HepG2 (cell line): ENCODE measurements at regions of chr1 and their contacts with region 1.

Region 1: DNA sequence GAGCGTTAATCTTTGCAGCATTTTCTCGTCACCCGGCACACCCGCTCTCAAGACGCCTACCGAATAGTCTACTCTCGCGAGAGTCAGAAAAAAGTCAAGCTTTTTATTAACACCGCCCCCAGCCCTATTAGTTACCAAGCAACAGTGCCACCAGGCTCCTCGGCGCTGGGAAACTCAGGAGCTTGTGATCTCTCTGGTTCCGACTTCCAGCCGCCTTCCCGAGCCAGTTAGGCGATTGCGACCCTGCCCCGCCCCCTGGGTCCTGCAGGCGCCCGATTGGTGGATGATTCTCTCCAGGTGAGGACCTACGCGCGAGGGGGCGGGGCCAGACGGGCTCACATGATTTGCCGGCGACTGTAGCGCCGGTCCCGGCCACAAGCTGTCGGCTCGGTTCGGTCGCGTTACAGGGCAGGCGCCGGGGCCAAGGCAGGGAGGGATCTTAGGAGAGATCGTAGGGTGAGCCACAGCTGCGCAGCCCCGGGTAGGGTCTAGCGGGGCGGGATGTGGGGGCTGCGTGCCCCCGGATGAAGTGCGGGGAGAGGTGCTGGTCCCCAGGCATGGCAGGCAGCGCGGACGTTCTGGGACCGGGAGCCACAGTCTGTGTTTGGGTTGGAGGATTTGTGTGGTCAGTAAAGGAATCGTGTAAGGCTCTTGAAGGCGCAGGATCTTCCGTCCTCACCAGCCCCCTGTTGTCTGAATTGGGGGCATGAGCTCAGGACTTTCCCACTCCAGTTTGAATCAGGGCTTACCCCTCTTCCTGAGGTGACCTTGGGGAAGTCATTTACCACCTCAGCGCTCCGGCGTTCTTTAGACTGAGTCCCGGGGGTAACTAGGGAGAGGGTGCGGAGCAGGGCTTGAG is at the start of gene PFKFB2:
- DNase-seq: peak; percentile 99
- ATAC-seq: peak; percentile 89
- H3K4me3 ChIP-seq: peak within 1 kb of the TSS; percentile 95 to 98 (median 96)
- H3K27ac ChIP-seq: peak within 1 kb of the TSS; percentile 90
- H3K4me1 ChIP-seq: peaks cover 30% of the 10 kb centered on the region
- H3K27me3 ChIP-seq: no peaks in the 10 kb centered on the region; a peak in 1 of 5 replicates
- CTCF ChIP-seq: peak; percentile 36
- EP300 ChIP-seq: no peak; a peak in 1 of 4 replicates
- POLR2A ChIP-seq: peak; percentile 86 to 87
- RAD21 ChIP-seq: peak; percentile 57
- total RNA-seq, gene PFKFB2: 9.4 and 10.6 TPM in 2 replicates

Region 2: GRCh38 chr1:206839857-206840256 is 213.3 kb before region 1 on chr1:
- CTCF ChIA-PET with region 1: no interaction called
- POLR2A ChIA-PET with region 1: no interaction called
- in situ Hi-C with region 1: no loop called
- intact Hi-C with region 1: no loop called
- DNase-seq: no peak
- ATAC-seq: no peak
- H3K4me3 ChIP-seq: no peak overlapping the region
- H3K27ac ChIP-seq: no peak overlapping the region
- H3K4me1 ChIP-seq: no peaks in the 10 kb centered on the region
- H3K27me3 ChIP-seq: peaks cover 0 to 31% of the 10 kb centered on the region in 2 experiments; a peak in 3 of 5 replicates
- CTCF ChIP-seq: no peak
- EP300 ChIP-seq: no peak
- POLR2A ChIP-seq: no peak
- RAD21 ChIP-seq: no peak

Region 3: GRCh38 chr1:207021139-207021861 is 31.8 kb before region 1 on chr1:
- CTCF ChIA-PET with region 1: no interaction called
- POLR2A ChIA-PET with region 1: interaction called, 11 read pairs
- in situ Hi-C with region 1: no loop called
- intact Hi-C with region 1: no loop called
- DNase-seq: peak; percentile 89
- ATAC-seq: peak; percentile 67
- H3K4me3 ChIP-seq: peak overlapping the region in 1 of 3 experiments; percentile 17; a peak in 1 of 6 replicates
- H3K27ac ChIP-seq: peak overlapping the region; percentile 56
- H3K4me1 ChIP-seq: peaks cover 77% of the 10 kb centered on the region
- H3K27me3 ChIP-seq: no peaks in the 10 kb centered on the region
- CTCF ChIP-seq: peak; percentile 45
- EP300 ChIP-seq: no peak; a peak in 1 of 4 replicates
- POLR2A ChIP-seq: no peak
- RAD21 ChIP-seq: no peak

Region 4: DNA sequence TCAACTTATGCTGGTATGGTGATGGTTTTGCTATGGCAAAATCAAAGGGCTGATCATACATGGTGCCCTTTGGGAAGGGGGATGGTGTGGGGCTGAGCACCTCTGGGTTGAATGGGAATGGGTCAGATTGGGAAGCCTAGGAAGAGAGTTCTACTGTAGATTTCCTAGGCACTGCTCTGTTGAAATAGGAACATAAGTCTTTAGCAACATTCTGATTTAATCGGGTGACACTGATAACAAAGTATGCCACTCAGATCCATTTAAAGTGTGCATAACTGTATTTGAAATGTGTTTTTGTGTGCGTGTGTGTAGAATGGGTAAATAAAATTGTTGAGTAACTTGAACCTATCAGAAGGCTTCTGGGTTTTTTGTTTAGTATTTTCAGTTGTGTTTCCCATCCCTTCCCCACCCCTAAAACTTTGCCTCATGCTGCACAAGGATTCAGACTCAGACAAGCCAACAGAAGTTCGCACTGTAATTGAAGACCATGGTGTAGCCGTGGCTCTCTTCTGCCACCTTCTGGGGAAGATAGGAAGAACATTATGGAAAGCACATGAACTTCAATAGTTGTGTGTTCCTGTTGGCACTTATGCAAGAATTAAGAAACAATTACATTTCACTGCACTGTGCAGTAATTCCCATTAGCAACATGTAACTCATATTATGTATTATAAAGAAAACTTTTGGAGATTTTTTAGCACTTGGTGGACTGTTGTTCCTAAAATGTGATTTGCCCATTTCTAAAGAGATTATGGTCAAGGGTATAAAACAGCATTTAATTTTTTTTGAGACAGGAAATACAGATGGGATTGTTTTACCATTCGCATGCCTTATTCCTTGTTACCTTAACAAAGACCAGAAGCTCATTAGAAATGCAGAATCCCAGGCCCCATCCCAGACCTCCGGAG is 24.6 kb after region 1 on chr1:
- CTCF ChIA-PET with region 1: interaction called, 14 read pairs
- POLR2A ChIA-PET with region 1: interaction called, 3 read pairs
- in situ Hi-C with region 1: no loop called
- intact Hi-C with region 1: loop called (anchors 1 kb)
- DNase-seq: peak; percentile 71
- ATAC-seq: peak; percentile 88
- H3K4me3 ChIP-seq: no peak overlapping the region
- H3K27ac ChIP-seq: no peak overlapping the region
- H3K4me1 ChIP-seq: 0 out of 2 replicates have a peak, but pooled peaks cover 6% of the 10 kb centered on the region
- H3K27me3 ChIP-seq: no peaks in the 10 kb centered on the region
- CTCF ChIP-seq: peak; percentile 92
- EP300 ChIP-seq: no peak
- POLR2A ChIP-seq: no peak
- RAD21 ChIP-seq: peak; percentile 78

Region 5: GRCh38 chr1:207103892-207104373 is 50.8 kb after region 1 on chr1 and contains the start of gene C4BPA:
- CTCF ChIA-PET with region 1: no interaction called
- POLR2A ChIA-PET with region 1: interaction called, 12 read pairs
- in situ Hi-C with region 1: no loop called
- intact Hi-C with region 1: no loop called
- DNase-seq: peak; percentile 90
- ATAC-seq: peak; percentile 97
- H3K4me3 ChIP-seq: no peak within 1 kb of the TSS
- H3K27ac ChIP-seq: peak within 1 kb of the TSS; percentile 52
- H3K4me1 ChIP-seq: peaks cover 36% of the 10 kb centered on the region
- H3K27me3 ChIP-seq: no peaks in the 10 kb centered on the region
- CTCF ChIP-seq: no peak
- EP300 ChIP-seq: peak in 1 of 2 experiments; percentile 51; a peak in 2 of 4 replicates
- POLR2A ChIP-seq: no peak
- RAD21 ChIP-seq: no peak
- total RNA-seq, gene C4BPA: 18.7 and 32.1 TPM in 2 replicates

Region 6: DNA sequence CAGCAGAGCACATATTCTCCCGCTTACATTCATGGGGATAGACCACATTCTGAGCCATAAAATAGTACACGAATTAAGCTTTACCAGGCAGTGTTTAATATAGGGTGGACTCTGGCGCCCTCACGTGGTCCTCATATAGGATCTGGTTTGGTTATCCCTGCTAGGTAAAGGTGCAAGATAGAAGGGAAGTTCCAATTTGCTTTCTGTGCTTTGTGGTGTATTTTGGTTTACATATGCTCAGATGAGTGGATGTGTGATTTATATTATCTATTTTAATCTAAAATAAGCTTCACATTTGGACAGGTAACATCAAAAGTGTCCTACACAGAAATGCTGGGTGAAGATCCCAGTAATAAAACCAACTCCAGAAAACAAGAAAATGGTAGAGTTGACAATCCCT is 446.4 kb after region 1 on chr1:
- CTCF ChIA-PET with region 1: interaction called, 3 read pairs
- POLR2A ChIA-PET with region 1: no interaction called
- in situ Hi-C with region 1: no loop called
- intact Hi-C with region 1: loop called (anchors 1 kb)
- DNase-seq: peak; percentile 47
- ATAC-seq: peak; percentile 80
- H3K4me3 ChIP-seq: no peak overlapping the region
- H3K27ac ChIP-seq: no peak overlapping the region
- H3K4me1 ChIP-seq: no peaks in the 10 kb centered on the region
- H3K27me3 ChIP-seq: peaks cover 4 to 31% of the 10 kb centered on the region in 2 experiments; a peak in 3 of 5 replicates
- CTCF ChIP-seq: peak; percentile 83
- EP300 ChIP-seq: no peak
- POLR2A ChIP-seq: no peak
- RAD21 ChIP-seq: peak; percentile 43; the same call in 1 of the 2 replicates